Ascending aorta (tissue), 2 donors: ENCODE measurements at regions of chr20 and their contacts with region 1.

Region 1: DNA sequence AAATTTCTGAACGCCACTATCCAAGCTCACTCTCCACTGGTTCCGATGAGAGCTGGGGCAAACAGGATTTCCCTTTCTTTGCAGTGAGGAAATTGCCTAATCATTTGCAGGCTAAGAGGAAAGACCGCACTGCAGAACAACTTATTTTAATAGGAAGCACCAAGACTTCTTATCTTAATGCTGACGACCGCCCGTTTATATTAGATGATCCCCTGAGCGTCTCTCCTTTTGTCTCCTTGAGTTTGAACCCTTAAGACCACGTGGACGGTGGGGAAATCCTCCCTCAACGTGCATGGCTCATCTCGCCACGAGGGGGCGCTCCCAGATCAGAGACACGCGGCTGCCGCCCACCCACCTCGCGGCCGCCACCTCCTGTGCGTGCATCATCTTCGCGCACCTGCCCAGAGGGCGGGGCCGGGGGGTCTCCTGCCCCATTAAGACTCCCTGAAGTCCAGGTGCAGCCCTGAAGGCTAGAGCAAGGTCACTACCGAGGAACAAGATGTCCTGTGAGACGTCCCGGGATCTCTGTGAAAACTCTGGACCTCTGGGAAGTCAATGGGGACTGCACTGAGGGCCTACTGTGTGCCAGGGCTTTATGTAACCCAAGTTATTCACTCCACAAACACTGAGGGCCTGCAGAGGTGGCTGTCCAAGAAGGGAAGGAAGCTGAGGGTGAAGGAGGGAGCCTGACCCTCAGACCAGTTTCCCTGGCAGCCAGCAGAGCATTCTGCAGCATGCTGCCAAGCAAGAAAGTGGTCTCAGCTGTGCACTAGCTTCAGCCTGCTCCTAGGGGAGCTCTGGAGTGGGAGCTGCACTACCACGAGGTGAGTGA is 28.1 kb downstream of the PDYN start:
- DNase-seq: peak in 1 of 2 donors; percentile 79
- H3K4me3 ChIP-seq: peak overlapping the region; percentile 23 to 38
- H3K27ac ChIP-seq: no peak overlapping the region
- H3K4me1 ChIP-seq: peaks cover 3 to 5% of the 10 kb centered on the region in 2 donors
- H3K27me3 ChIP-seq: no peaks in the 10 kb centered on the region
- CTCF ChIP-seq: peak; percentile 85 to 96 (median 91)

Region 2: GRCh38 chr20:1844325-1845162 is 121.2 kb before region 1 on chr20:
- intact Hi-C with region 1: no loop called
- DNase-seq: peak; percentile 56 to 74
- H3K4me3 ChIP-seq: no peak overlapping the region
- H3K27ac ChIP-seq: no peak overlapping the region
- H3K4me1 ChIP-seq: no peaks in the 10 kb centered on the region
- H3K27me3 ChIP-seq: no peaks in the 10 kb centered on the region
- CTCF ChIP-seq: no peak

Region 3: DNA sequence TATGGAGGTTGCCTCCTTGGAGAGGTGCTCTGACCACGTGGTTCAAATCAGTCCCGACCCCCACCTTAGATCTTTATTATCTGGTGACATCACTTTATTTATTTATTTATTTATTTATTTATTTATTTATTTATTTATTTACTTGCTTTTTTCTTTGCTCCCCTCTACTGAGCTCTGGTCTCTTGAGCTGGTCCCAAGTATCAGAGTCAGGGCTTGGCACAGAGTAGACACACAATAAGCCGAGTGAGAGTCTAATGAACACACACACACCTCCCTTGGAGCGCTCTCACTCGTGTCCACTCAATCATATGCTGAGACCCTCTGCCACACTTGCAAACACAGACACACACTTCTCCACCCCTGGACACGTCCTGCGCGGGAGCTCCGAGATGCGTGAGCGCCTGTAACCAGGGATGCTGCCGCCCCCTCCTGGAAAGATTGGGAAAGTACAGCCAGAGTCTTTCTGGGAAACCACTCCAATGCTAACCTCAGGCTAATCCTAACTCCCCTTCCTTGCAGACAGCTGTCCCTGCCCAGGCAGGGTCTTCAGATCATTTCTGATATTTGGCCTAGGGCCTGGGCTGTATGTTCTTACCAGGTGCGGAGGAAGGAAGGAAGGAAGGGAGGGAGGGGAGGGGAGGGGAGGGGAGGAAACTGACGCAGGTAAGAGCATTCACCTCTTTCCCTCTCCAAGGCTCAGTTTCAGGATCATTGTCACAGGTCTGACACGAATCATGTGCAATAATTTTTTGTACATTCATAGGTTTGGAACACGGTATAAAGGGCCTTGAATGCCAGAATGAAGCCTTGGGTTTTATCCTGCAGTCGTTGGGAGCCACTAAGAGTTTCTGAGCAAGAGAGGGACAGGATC is 206.8 kb after region 1 on chr20:
- intact Hi-C with region 1: loop called (anchors 1 kb)
- DNase-seq: peak in 1 of 2 donors; percentile 84
- H3K4me3 ChIP-seq: no peak overlapping the region
- H3K27ac ChIP-seq: no peak overlapping the region
- H3K4me1 ChIP-seq: peaks cover 0 to 3% of the 10 kb centered on the region in 2 donors
- H3K27me3 ChIP-seq: no peaks in the 10 kb centered on the region
- CTCF ChIP-seq: peak; percentile 79 to 95 (median 87)

Region 4: GRCh38 chr20:2451939-2452732 is 486.4 kb after region 1 on chr20:
- intact Hi-C with region 1: loop called (anchors 10 kb)
- DNase-seq: peak in 1 of 2 donors; percentile 79
- H3K4me3 ChIP-seq: no peak overlapping the region
- H3K27ac ChIP-seq: no peak overlapping the region
- H3K4me1 ChIP-seq: peaks cover 0 to 6% of the 10 kb centered on the region in 2 donors
- H3K27me3 ChIP-seq: no peaks in the 10 kb centered on the region
- CTCF ChIP-seq: peak; percentile 22 to 84 (median 75)